Calu3 (cell line): ENCODE measurements at regions of chr1 and their contacts with region 1.

Region 1: DNA sequence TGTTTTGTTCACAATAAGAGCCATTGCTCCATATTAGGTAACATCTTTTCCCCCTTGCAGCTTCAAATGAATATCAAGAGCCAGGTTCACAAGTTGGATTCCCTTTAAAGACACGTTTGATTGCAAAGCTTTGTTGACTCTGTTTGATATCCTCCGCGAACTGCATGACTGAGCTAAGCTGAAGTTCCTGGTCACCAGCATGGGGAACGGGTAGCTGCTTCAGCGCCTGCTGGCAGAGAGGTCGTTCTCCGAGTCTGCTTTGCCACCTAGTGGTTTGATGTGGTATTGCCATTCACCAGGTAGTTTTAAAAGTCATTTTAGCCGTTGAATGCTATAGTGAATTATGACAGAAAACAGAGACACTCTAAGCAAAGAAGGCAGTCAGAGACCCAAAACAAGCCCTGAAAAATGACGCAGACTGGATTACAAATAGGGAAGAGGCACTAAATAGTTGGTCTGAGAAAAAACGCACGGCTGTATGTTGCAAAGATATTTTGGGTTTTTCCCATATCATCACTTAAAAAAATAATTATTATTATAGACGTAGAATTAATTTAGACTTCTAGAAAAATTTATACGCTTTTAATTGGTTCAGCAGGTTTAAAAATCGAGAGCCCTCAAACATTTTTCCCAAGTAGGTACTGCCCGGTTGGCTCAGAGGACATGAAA is 193.5 kb upstream of the FMN2 start:
- DNase-seq: peak; percentile 84
- H3K4me3 Mint-ChIP-seq: peak overlapping the region; percentile 24
- H3K27ac Mint-ChIP-seq: peak overlapping the region; percentile 56
- H3K4me1 Mint-ChIP-seq: peaks cover 18% of the 10 kb centered on the region
- H3K27me3 Mint-ChIP-seq: no peaks in the 10 kb centered on the region
- CTCF ChIP-seq: peak; percentile 94

Region 2: GRCh38 chr1:238252033-238252802 is 1646.0 kb before region 1 on chr1:
- CTCF ChIA-PET with region 1: no interaction called
- intact Hi-C with region 1: loop called (anchors 2 kb)
- DNase-seq: peak; percentile 77
- H3K4me3 Mint-ChIP-seq: no peak overlapping the region
- H3K27ac Mint-ChIP-seq: peak overlapping the region; percentile 12
- H3K4me1 Mint-ChIP-seq: peaks cover 10% of the 10 kb centered on the region
- H3K27me3 Mint-ChIP-seq: no peaks in the 10 kb centered on the region
- CTCF ChIP-seq: peak; percentile 46

Region 3: DNA sequence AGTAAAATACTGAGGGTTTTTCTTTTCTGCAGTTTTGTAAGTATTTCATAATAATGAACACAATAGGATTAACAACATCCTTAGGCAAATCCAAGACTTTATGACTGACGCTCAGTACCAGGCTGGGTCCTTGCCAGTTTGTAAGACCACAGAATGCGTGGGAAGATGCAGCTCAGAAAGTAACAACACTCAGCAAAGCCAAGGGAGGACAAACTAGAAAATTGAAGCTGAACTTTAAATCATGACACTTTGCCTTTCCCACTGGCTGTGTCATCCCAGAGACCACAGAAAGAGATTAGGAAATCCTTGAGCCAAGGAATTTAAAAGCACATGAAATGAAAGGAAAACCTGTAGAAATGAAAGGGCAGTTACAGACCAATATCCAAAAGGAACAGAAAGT is 938.1 kb before region 1 on chr1:
- CTCF ChIA-PET with region 1: interaction called, 4 read pairs
- intact Hi-C with region 1: loop called (anchors 5 kb)
- DNase-seq: no peak
- H3K4me3 Mint-ChIP-seq: peak overlapping the region; percentile 33
- H3K27ac Mint-ChIP-seq: peak overlapping the region; percentile 17
- H3K4me1 Mint-ChIP-seq: peaks cover 38% of the 10 kb centered on the region
- H3K27me3 Mint-ChIP-seq: no peaks in the 10 kb centered on the region
- CTCF ChIP-seq: no peak

Region 4: GRCh38 chr1:239233626-239234025 is 664.6 kb before region 1 on chr1:
- CTCF ChIA-PET with region 1: no interaction called
- intact Hi-C with region 1: loop called (anchors 10 kb)
- DNase-seq: no peak
- H3K4me3 Mint-ChIP-seq: no peak overlapping the region
- H3K27ac Mint-ChIP-seq: no peak overlapping the region
- H3K4me1 Mint-ChIP-seq: peaks cover 11% of the 10 kb centered on the region
- H3K27me3 Mint-ChIP-seq: no peaks in the 10 kb centered on the region
- CTCF ChIP-seq: no peak

Region 5: GRCh38 chr1:239315631-239316217 is 582.5 kb before region 1 on chr1:
- CTCF ChIA-PET with region 1: no interaction called
- intact Hi-C with region 1: loop called (anchors 5 kb)
- DNase-seq: no peak
- H3K4me3 Mint-ChIP-seq: peak overlapping the region; percentile 63
- H3K27ac Mint-ChIP-seq: peak overlapping the region; percentile 50
- H3K4me1 Mint-ChIP-seq: no peaks in the 10 kb centered on the region
- H3K27me3 Mint-ChIP-seq: no peaks in the 10 kb centered on the region
- CTCF ChIP-seq: no peak

Region 6: GRCh38 chr1:239814303-239814881 is 83.8 kb before region 1 on chr1:
- CTCF ChIA-PET with region 1: interaction called, 5 read pairs
- intact Hi-C with region 1: loop called (anchors 5 kb)
- DNase-seq: peak; percentile 69
- H3K4me3 Mint-ChIP-seq: peak overlapping the region; percentile 54
- H3K27ac Mint-ChIP-seq: peak overlapping the region; percentile 69
- H3K4me1 Mint-ChIP-seq: peaks cover 51% of the 10 kb centered on the region
- H3K27me3 Mint-ChIP-seq: no peaks in the 10 kb centered on the region
- CTCF ChIP-seq: no peak

Region 7: DNA sequence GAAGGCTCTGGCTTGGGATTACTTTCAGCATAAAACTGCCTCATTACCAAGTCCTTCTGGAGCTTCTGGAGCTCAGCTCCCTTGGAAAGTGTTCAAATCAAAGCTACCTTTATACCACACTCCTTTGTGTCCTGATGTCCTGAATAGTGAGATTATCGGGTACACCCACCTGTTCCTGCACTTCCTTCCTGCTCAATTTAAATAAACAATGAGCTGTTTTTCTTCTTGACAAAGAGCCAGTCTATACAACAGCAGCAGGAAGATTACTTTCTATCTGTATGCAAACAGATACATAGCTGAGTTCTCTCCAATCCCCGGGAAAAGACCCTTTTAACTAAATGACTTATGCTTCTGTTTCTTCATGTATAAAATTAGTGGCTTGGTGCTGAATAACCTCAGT is 64.5 kb before region 1 on chr1:
- CTCF ChIA-PET with region 1: interaction called, 10 read pairs
- intact Hi-C with region 1: no loop called
- DNase-seq: no peak
- H3K4me3 Mint-ChIP-seq: no peak overlapping the region
- H3K27ac Mint-ChIP-seq: peak overlapping the region; percentile 55
- H3K4me1 Mint-ChIP-seq: peaks cover 14% of the 10 kb centered on the region
- H3K27me3 Mint-ChIP-seq: no peaks in the 10 kb centered on the region
- CTCF ChIP-seq: no peak

Region 8: DNA sequence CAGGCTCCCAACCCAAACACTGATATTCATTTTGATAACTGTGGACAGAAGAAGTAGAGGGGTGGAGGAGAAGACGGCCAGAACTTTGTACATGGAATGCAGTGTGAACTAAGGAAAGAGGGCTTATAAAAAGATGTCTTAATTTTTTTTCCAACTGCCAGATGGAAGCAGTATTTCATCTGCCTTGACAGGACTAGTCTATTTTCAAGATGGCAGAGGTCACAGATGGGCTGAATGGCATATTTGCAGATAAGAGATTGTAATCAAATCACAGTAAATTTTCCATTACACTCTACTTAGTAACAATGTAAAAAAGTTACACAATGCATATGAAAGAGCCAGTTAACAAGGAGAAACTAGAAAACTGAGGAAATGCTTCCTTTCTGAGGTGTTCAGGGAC is 53.4 kb before region 1 on chr1:
- CTCF ChIA-PET with region 1: no interaction called
- intact Hi-C with region 1: no loop called
- DNase-seq: no peak
- H3K4me3 Mint-ChIP-seq: no peak overlapping the region
- H3K27ac Mint-ChIP-seq: no peak overlapping the region
- H3K4me1 Mint-ChIP-seq: no peaks in the 10 kb centered on the region
- H3K27me3 Mint-ChIP-seq: no peaks in the 10 kb centered on the region
- CTCF ChIP-seq: no peak

Region 9: GRCh38 chr1:239874832-239875231 is 23.4 kb before region 1 on chr1:
- CTCF ChIA-PET with region 1: no interaction called
- intact Hi-C with region 1: no loop called
- DNase-seq: no peak
- H3K4me3 Mint-ChIP-seq: no peak overlapping the region
- H3K27ac Mint-ChIP-seq: no peak overlapping the region
- H3K4me1 Mint-ChIP-seq: peaks cover 5% of the 10 kb centered on the region
- H3K27me3 Mint-ChIP-seq: no peaks in the 10 kb centered on the region
- CTCF ChIP-seq: no peak

Region 10: DNA sequence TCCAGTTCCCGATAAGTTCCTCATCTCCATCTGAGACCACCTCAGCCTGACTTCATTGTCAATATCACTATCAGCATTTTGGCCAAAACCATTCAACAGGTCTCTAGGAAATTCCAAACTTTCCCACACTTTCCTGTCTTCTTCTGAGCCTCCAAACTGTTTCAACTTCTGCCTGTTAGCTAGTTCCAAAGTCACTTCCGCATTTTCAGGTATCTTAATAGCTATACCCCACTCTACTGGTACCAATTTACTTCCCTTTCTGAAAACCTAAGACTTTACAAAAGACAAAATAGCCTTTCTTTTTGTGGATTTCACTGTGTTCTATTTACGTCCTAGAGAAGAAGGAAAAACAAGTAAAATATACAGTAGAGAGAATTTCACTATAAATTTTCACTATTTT is 46.5 kb after region 1 on chr1:
- CTCF ChIA-PET with region 1: no interaction called
- intact Hi-C with region 1: no loop called
- DNase-seq: no peak
- H3K4me3 Mint-ChIP-seq: no peak overlapping the region
- H3K27ac Mint-ChIP-seq: no peak overlapping the region
- H3K4me1 Mint-ChIP-seq: peaks cover 7% of the 10 kb centered on the region
- H3K27me3 Mint-ChIP-seq: no peaks in the 10 kb centered on the region
- CTCF ChIP-seq: no peak